GM13976 (cell line): ENCODE measurements at regions of chr7 and their contacts with region 1.

Region 1: DNA sequence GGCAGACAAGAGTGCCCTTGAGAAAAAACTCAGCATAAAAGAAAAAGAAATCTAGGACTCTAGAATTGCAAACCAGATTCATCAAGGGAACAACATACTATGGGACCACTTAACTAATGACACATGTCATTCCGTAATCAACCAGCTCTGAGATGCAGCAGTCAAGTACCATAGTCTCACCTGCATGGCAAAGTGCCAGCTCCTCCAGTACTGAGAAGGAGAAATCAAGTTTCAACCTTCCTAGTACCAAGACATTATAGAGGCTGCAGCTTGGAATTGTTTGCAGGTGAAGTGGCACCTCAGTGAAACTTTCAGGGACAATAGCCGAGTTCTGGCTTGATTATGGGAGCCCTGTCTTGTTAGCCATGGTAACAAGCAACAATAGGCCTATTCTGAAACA is 11.5 kb downstream of the STEAP1 start:
- DNase-seq: no peak
- CTCF ChIP-seq: no peak

Region 2: DNA sequence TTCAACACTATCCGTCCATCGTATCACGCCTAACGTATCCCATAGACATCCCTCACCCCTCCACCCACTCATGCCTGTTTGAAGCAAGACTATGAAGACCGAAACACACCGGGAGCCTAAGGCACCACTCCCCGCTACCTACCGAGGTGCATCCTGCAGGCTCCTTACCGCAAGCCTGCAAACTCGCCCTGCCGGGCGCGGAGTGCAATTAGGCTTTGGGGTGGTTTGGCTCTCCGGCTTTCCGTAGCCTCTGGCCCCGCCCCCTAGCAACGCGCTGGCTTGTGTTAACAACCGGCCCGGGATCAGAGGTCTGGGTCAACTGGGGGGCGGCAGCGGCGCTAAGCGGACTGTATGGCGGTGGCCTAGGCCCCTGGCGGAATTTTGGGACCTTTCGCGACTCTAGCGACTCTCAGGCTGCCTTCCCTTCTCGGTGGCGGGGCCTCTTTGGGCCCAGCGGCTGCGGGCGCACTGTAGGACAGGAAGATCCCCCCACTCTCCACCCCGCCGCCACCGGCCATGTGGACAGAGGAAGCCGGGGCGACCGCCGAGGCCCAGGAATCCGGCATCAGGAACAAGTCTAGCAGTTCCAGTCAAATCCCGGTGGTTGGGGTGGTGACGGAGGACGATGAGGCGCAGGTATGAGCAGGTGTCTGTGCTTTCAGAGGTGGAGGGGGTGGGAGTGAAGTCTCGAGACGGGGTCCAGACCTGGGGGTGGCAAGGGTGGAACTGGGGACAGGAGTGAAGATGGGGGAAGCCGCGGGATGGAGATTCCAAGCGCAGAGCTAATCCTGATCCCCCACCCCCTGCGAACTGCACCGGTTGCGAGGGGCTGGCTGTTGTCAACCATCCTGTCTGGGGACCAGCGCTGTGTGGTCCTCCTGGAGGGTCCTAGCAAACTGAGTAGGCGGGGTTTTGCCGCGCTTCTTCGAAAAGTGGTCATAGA is 79.5 kb after region 1 on chr7 and contains the start of gene CFAP69:
- in situ Hi-C with region 1: loop called (anchors 10 kb)
- DNase-seq: peak; percentile 87
- CTCF ChIP-seq: no peak

Region 3: GRCh38 chr7:90424720-90425119 is 259.0 kb after region 1 on chr7:
- in situ Hi-C with region 1: loop called (anchors 10 kb)
- DNase-seq: peak; percentile 49
- CTCF ChIP-seq: no peak